Gastrocnemius medialis (tissue), 4 donors: ENCODE measurements at regions of chr11 and their contacts with region 1.

Region 1: GRCh38 chr11:47407746-47408590 is at the start of gene SLC39A13:
- DNase-seq: peak; percentile 91
- ATAC-seq: peak; percentile 84 to 87
- H3K4me3 ChIP-seq: peak within 1 kb of the TSS; percentile 69 to 97 (median 90)
- H3K27ac ChIP-seq: peak within 1 kb of the TSS; percentile 93 to 100 (median 96)
- H3K4me1 ChIP-seq: peaks cover 21 to 31% of the 10 kb centered on the region in 2 donors
- H3K27me3 ChIP-seq: no peaks in the 10 kb centered on the region
- CTCF ChIP-seq: peak; percentile 71 to 96 (median 94)
- POLR2A ChIP-seq: peak; percentile 95 to 97
- total RNA-seq, gene SLC39A13: 16.8 to 48.9 (median 25.6) TPM

Region 2: DNA sequence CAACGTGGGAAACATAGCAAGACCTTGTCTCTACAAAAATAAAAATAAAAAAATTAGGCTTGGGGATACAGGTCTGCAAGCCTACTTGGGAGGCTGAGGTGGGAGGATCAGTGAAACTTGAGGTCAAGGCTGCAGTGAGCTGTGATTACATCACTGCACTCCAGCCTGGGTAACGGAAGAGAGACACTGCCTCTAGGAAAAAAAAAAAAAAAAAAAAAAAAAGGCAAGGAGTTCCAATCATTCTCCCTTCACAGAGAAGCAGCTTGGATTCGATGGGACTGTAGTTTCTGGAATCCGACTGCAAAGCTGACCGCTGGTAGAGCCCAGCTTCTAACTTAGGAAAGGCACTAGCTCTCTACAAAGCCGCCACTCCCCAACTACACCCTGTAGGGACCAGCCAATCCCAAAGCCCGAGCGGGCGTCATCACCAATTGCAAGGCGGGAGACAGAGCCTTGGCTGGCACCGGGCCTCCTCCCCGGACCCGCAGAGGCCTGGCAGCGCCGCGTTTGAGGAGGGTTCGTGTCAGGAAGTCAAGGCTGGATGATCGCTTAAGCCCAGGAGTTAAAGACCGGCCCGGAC is 193.9 kb before region 1 on chr11:
- in situ Hi-C with region 1: no loop called
- intact Hi-C with region 1: loop called (anchors 1 kb)
- DNase-seq: peak; percentile 92 to 94
- ATAC-seq: peak; percentile 95 to 96
- H3K4me3 ChIP-seq: peak overlapping the region; percentile 69 to 89 (median 70)
- H3K27ac ChIP-seq: peak overlapping the region; percentile 95 to 98 (median 97)
- H3K4me1 ChIP-seq: peaks cover 14 to 23% of the 10 kb centered on the region in 2 donors
- H3K27me3 ChIP-seq: no peaks in the 10 kb centered on the region
- CTCF ChIP-seq: no peak
- POLR2A ChIP-seq: peak; percentile 64 to 74

Region 3: GRCh38 chr11:47269002-47269828 is 138.8 kb before region 1 on chr11:
- in situ Hi-C with region 1: no loop called
- intact Hi-C with region 1: loop called (anchors 2 kb)
- DNase-seq: peak; percentile 88 to 93
- ATAC-seq: peak; percentile 77 to 81
- H3K4me3 ChIP-seq: peak overlapping the region; percentile 55 to 87 (median 86)
- H3K27ac ChIP-seq: peak overlapping the region; percentile 98 to 99 (median 98)
- H3K4me1 ChIP-seq: peaks cover 37 to 40% of the 10 kb centered on the region in 2 donors
- H3K27me3 ChIP-seq: no peaks in the 10 kb centered on the region
- CTCF ChIP-seq: no peak
- POLR2A ChIP-seq: no peak

Region 4: GRCh38 chr11:47426061-47426956 is 18.3 kb after region 1 on chr11 and contains the start of gene PSMC3:
- in situ Hi-C with region 1: no loop called
- intact Hi-C with region 1: loop called (anchors 1 kb)
- DNase-seq: peak; percentile 97 to 98
- ATAC-seq: peak; percentile 89 to 91
- H3K4me3 ChIP-seq: peak within 1 kb of the TSS; percentile 73 to 99 (median 84)
- H3K27ac ChIP-seq: peak within 1 kb of the TSS; percentile 91 to 96 (median 94)
- H3K4me1 ChIP-seq: peaks cover 15 to 25% of the 10 kb centered on the region in 2 donors
- H3K27me3 ChIP-seq: no peaks in the 10 kb centered on the region
- CTCF ChIP-seq: no peak
- POLR2A ChIP-seq: peak; percentile 89 to 90
- total RNA-seq, gene PSMC3: 243 to 350 (median 329) TPM

Region 5: DNA sequence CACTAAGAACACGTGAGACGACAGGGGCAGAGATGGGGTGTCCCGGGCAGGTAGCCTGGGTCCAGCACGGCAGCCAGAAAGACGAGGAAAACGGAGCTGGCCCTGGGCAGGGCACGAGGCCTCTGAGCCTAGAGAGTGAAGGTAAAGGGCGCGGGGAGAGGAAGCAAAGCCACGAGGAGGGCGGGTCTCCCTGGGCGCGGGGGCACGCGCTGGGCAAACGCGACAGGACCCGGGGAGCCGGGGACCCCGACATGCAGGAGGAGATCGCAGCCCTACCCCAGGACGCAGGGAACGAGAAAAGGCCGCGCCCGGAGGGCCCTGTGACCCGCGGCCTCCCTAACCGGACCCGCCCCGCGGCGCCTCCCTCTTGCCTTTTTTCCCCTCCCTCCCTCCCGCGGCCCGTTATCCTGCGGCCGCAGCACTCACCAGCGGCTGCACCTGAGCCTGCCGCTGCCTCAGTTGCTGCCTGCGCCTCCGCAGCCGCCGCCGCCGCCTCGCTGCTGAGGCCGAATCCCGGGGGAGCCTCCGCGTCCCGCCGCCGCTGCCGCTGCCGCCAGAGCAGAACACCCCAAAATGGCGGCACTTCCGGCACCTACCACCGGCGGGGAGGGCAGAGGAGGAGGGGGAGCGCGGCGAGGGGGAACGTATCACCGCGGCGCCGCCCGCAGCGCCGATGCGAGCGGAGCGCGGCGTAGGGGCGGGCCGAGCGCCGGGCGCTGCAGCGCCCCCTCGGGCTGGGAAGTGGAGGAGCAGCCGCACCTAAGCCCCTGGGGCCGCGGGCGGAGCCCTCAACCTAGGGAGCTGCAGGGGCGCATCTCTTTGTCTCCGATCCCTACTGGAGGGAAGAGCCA is 144.8 kb after region 1 on chr11 and contains the start of gene CELF1:
- in situ Hi-C with region 1: no loop called
- intact Hi-C with region 1: loop called (anchors 2 kb)
- DNase-seq: peak; percentile 84 to 90
- ATAC-seq: peak; percentile 74 to 78
- H3K4me3 ChIP-seq: peak within 1 kb of the TSS; percentile 91 to 95 (median 92)
- H3K27ac ChIP-seq: peak within 1 kb of the TSS; percentile 96 to 99 (median 97)
- H3K4me1 ChIP-seq: peaks cover 45 to 62% of the 10 kb centered on the region in 2 donors
- H3K27me3 ChIP-seq: no peaks in the 10 kb centered on the region
- CTCF ChIP-seq: peak; percentile 78 to 96 (median 94)
- POLR2A ChIP-seq: peak; percentile 88 to 92
- total RNA-seq, gene CELF1: 106 to 185 (median 136) TPM